ENCODE measurements at regions of chrX and their contacts with region 1.

Region 1: GRCh38 chrX:37755025-37755424 is 24.8 kb upstream of the CYBB start:
- DNase-seq: peak; percentile 20
- H3K4me3 Mint-ChIP-seq: no peak overlapping the region
- H3K27ac Mint-ChIP-seq: no peak overlapping the region
- H3K4me1 Mint-ChIP-seq: peaks cover 8% of the 10 kb centered on the region
- H3K27me3 Mint-ChIP-seq: peaks cover 1% of the 10 kb centered on the region

Region 2: DNA sequence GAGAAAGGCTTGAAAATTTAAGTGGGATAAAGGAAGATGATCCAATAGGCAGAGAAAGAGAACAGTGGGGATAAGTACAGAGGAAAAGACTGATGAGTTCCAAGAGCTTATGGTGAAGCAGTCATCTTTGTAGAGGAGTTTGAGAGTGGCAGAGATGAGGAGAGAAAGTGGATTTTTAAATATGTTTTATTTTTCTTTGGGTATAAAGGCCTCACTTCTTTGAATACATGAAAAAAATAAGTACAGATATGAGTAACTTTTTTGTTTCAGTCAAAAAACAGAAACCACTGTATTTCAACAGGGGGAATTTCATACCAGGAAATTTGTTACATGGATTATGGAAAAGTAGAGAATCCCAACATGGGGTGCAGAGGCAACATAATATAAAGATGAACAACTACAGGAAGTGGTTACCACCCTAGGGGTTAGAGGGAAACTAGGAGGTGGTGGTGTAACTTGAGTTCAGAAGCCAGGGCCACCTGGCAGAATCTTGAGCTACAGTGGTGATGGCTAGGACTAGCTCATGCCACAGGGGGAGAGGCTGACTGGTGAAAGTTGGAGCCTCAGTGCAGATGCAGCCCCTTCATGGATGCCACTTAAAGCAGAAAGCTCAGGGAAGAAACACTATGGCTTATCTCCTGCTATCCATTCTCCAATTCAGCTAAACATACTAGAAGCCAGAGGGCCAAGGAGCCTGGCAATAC is 21.4 kb after region 1 on chrX:
- intact Hi-C with region 1: loop called (anchors 2 kb)
- DNase-seq: no peak
- H3K4me3 Mint-ChIP-seq: peak overlapping the region; percentile 40
- H3K27ac Mint-ChIP-seq: peak overlapping the region; percentile 32
- H3K4me1 Mint-ChIP-seq: peaks cover 22% of the 10 kb centered on the region
- H3K27me3 Mint-ChIP-seq: no peaks in the 10 kb centered on the region

Region 3: DNA sequence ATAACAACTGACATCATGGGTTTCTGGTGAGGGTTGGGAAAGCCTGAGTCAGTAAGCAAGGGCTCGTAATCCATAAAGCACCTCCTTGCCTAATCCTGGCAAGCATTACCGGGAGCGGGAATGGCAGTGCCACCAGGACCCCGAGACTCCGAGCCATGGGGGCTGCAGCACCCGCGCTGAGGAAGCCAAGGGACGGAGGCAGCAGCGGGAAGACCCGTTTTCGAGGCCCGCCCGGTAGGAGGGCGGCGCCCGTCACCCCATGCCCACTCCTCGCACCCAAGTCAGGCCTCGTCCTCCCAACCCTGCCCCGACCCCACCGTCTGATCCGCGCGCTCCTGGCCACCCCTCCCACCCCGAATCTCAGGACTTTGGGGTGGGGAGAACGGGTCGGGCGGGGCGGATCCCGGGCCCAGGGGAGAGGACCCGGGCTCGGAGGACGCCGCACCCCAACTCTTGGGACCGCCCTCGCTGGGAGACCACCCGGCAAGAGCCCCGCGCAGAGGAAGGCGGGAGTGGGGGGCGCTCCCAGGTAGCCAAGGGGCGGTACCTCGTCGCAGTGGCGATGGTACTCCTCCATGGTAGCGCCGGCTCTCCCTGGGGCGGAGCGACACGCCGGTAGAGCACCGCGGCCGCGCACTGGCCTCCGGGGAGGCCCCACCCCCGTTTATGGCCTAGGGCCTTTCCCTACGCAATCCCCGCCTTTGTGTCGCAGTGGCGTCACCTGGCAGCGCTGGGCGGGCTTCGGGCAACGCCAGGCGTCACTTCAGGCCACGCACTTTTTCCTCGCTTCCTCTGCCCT is 92.1 kb after region 1 on chrX and contains the start of gene DYNLT3:
- intact Hi-C with region 1: loop called (anchors 2 kb)
- DNase-seq: peak; percentile 75
- H3K4me3 Mint-ChIP-seq: peak within 1 kb of the TSS; percentile 80
- H3K27ac Mint-ChIP-seq: peak within 1 kb of the TSS; percentile 86
- H3K4me1 Mint-ChIP-seq: peaks cover 17% of the 10 kb centered on the region
- H3K27me3 Mint-ChIP-seq: no peaks in the 10 kb centered on the region
- total RNA-seq, gene DYNLT3: 15.3 and 16.7 TPM in 2 replicates

Region 4: GRCh38 chrX:37926700-37927099 is 171.7 kb after region 1 on chrX:
- intact Hi-C with region 1: no loop called
- DNase-seq: no peak
- H3K4me3 Mint-ChIP-seq: no peak overlapping the region
- H3K27ac Mint-ChIP-seq: no peak overlapping the region
- H3K4me1 Mint-ChIP-seq: no peaks in the 10 kb centered on the region
- H3K27me3 Mint-ChIP-seq: peaks cover 5% of the 10 kb centered on the region

Region 5: GRCh38 chrX:37976153-37976552 is 221.1 kb after region 1 on chrX:
- intact Hi-C with region 1: loop called (anchors 1 kb)
- DNase-seq: no peak
- H3K4me3 Mint-ChIP-seq: no peak overlapping the region
- H3K27ac Mint-ChIP-seq: no peak overlapping the region
- H3K4me1 Mint-ChIP-seq: peaks cover 19% of the 10 kb centered on the region
- H3K27me3 Mint-ChIP-seq: no peaks in the 10 kb centered on the region